Right ventricle myocardium inferior (tissue), 1 donor: ENCODE measurements at regions of chr12 and their contacts with region 1.

Region 1: DNA sequence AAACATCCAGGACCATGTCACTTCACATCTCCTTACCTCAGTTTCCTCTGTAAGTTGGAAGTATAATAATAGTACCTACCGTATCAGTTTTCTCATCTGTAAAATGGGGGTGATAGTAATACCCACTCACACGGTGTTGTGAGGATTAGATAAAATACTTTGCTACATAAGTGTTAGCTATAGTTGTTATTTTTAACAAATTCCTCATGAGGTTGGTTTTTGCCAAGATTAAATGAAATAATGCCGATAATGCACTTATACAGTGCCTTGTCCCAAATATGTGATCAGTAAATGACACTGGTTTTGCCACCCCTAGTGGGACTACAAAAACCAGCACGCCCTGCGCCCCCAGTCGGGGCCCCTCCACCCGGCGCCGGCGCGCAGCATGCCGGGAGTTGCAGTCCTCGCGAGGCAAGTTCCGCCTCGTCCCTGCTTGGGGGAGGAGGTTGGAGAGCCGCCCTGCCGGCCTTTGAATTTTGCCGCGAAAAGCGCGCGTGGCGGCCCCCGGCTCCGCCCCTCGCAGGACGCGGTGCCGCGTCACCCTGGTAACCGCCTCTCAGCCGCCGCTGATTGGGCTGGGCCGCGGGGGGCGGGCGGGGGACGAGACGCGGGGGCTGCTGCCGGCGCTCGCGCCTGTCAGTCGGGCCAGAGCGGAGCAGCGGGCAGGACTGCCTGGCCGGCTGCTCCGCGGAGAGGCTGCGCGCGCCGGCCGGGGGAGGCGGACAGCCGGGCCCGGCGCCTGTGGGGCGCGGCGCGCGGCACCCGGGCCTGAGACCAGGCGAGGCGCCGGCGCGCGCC is at the start of gene FAM222A:
- DNase-seq: peak; percentile 97
- ATAC-seq: peak; percentile 97
- total RNA-seq, gene FAM222A: 27.4 TPM

Region 2: DNA sequence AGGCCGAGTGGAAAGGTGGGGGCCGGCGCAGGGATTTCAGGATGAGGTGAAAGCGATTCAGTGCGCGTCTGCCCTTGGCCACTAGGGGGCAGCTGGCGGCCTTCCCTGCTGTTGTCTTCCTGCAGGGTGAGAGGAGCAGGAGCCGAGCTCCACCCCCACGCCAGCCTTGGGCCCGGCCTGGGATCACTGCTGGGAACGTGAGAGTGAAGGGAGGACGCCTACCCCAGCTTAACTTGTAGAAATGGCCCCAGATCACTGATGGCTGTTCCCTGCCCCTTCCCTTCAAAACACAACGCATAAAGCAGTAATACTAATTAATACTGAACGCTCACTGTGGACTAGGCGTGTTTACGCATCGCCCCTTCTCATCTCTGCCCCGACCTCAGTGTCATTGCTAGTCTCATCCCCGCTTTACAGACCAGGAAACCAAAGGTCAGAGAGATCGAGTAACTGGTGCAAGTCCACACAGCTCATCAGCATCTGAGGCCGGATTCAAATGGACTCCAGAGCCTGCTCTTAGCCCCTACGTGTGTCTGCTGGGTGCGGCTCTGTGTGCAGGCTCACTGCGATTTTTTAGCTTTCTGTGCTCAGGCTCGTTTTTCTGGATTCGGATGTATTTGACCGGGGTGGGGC is 115.5 kb before region 1 on chr12:
- intact Hi-C with region 1: loop called (anchors 2 kb)
- DNase-seq: peak; percentile 94
- ATAC-seq: peak; percentile 90

Region 3: GRCh38 chr12:109763201-109763841 is 49.9 kb after region 1 on chr12:
- intact Hi-C with region 1: loop called (anchors 5 kb)
- DNase-seq: no peak
- ATAC-seq: no peak

Region 4: GRCh38 chr12:110004598-110004997 is 291.2 kb after region 1 on chr12:
- intact Hi-C with region 1: no loop called
- DNase-seq: no peak
- ATAC-seq: no peak

Region 5: DNA sequence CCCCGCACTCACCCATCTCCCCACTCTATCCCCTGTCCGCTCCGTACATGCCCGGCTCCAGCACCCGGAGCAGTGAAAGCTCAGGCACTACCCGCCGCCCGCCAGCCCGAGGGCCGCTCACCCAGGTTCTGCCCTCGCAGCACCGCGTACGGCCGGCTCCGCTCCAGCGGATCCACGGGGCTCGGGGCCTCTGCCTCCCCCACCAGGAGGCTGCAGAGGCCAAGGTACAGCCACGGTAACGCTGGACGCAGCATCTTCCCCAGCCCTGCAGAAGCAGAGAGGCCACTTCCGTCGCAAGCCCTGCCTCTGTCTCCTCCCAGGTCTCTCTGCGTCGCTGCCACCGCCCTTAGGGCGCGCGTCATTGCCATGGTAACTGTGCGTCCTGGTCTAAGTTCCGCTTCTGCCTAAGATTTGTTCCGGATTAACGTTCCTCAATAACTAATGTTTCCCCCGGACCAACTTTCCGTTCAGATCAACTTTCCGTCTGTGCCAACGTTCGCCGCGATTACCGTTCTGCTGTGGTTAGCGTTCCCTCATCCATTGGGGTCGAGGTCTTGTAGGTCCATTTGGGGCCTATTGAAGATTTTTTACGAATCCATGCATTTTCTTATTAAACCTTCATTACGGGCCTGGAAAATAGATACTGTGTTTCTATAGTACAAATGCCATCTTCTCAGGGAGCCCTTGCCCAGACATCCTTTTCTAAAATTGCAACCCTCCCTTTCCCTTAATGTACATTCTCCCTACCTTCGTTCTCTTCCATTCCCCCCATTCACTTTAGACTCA is 335.0 kb after region 1 on chr12 and contains the start of gene C12orf76:
- intact Hi-C with region 1: no loop called
- DNase-seq: peak; percentile 98
- ATAC-seq: peak; percentile 98
- total RNA-seq, gene C12orf76: 5.3 TPM